Activated CD4-positive, alpha-beta T cell treated with anti-CD3 and anti-CD28 coated beads for 36 hours (primary cell): ENCODE measurements at regions of chr15 and their contacts with region 1.

Region 1: DNA sequence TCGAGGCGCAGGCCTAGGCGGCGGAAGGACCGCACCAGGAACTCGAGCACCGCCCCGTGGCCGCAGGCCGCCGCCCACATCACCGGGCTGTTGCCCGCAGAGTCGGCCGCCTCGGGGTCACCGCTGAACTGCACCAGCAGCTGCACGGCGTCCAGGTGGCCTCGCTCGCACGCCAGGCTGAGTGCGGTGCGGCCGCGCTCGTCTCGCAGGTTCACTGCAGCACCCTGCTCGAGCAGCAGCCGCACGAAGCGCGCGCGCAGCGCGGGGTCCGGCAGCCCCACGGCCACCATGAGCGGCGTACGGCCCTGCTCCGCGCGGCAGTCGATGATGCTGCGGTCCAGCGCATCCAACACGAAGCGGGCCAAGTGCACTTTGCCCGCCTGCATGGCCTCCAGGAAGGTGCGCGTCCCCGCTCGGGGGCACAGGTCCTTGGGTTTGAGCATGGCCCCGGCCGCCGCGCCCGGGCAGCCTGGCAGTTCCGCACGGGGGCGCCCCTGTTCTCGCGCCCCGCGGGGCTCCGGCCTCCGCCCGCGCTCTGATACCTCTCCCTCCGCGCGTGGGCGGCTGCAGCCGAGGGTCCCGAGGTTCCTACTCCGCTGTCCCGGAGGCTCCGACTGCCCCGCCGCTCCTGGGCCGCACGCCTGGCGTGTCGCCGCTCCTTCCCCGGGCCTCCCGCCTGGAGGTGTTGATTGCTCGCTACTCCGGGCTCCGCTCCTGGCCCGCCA is 558 bp downstream of the ANKRD63 start:
- DNase-seq: peak; percentile 69
- ATAC-seq: peak; percentile 64
- H3K4me3 Mint-ChIP-seq: peak overlapping the region; percentile 53
- H3K27ac Mint-ChIP-seq: no peak overlapping the region
- H3K4me1 Mint-ChIP-seq: peaks cover 4% of the 10 kb centered on the region
- H3K27me3 Mint-ChIP-seq: peaks cover 31% of the 10 kb centered on the region

Region 2: DNA sequence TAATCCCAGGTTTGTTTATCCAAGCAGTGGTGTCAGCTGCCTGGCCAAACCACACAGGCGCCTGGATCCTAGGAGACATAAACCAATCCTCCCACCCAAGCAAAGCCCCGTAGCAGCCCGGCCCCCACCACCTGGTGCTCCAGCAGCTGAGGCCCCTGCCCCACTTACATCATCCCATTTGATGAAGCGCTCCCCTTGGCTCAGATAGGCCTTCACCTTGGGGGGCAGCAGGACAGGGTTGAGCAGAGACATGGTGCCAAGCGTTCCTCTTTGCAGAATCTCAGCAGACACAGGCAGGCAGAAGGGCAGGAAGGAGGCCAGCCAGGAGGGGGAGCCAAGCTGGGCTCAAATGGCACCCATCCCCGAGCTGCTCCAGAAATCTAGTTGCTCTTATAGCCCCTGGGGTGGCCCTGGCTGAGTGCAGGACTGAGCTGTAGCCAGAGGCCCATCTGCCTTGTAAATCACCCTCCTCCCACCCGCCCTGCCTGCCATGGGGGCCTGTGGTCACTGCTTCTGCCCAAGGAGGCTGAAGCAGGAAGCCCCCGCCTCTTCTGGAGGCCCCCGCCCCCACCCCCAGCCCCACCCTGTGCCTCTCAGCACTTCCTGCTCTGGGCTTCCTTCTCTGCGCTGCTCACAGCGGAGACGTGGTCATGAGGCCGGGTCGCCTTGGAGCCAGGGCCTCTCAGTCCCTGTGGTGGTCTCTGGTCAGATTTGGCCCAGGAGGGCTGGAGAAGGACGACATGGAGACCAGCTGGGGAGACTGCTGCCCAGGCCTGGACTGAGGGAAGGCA is 25.3 kb after region 1 on chr15 and contains the start of gene PLCB2:
- CTCF ChIA-PET with region 1: interaction called, 393 read pairs
- POLR2A ChIA-PET with region 1: interaction called, 5 read pairs
- intact Hi-C with region 1: loop called (anchors 1 kb)
- DNase-seq: peak; percentile 83
- ATAC-seq: peak; percentile 79
- H3K4me3 Mint-ChIP-seq: peak within 1 kb of the TSS; percentile 91
- H3K27ac Mint-ChIP-seq: peak within 1 kb of the TSS; percentile 97
- H3K4me1 Mint-ChIP-seq: peaks cover 31% of the 10 kb centered on the region
- H3K27me3 Mint-ChIP-seq: no peaks in the 10 kb centered on the region
- total RNA-seq, gene PLCB2: 67.9 to 86.8 TPM

Region 3: GRCh38 chr15:40613080-40613479 is 330.8 kb after region 1 on chr15:
- CTCF ChIA-PET with region 1: no interaction called
- POLR2A ChIA-PET with region 1: no interaction called
- intact Hi-C with region 1: no loop called
- DNase-seq: no peak
- ATAC-seq: no peak
- H3K4me3 Mint-ChIP-seq: no peak overlapping the region
- H3K27ac Mint-ChIP-seq: no peak overlapping the region
- H3K4me1 Mint-ChIP-seq: no peaks in the 10 kb centered on the region
- H3K27me3 Mint-ChIP-seq: no peaks in the 10 kb centered on the region